ENCODE measurements at regions of chr1 and their contacts with region 1.

Region 1: DNA sequence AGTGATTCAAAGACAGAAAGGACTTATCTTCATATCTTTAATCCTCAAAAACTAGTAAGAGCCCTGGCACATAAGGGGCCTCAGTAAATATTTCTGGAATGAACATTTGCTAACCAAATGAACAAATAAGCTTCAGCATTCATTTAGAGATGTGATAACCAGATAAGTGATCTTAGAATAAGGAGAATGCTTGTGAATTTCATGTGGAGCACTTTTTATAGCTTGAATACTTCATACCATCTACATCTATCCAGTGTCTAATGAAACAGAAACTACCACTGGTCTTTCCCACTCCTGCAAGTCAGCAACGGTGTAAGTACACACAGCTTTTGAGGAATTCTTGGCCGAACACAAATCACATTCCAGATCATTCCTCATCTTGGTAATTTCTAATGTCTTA is 38.5 kb downstream of the EDEM3 start:
- DNase-seq: no peak
- H3K4me3 ChIP-seq: no peak overlapping the region
- H3K4me3 Mint-ChIP-seq: no peak overlapping the region
- H3K27ac ChIP-seq: no peak overlapping the region
- H3K27ac Mint-ChIP-seq: peak overlapping the region in 3 of 7 donors; percentile 25 to 73 (median 50)
- H3K4me1 ChIP-seq: peaks cover 5% of the 10 kb centered on the region
- H3K4me1 Mint-ChIP-seq: peaks cover 0 to 6% (median 2%) of the 10 kb centered on the region in 4 donors
- H3K27me3 ChIP-seq: no peaks in the 10 kb centered on the region
- H3K27me3 Mint-ChIP-seq: no peaks in the 10 kb centered on the region

Region 2: DNA sequence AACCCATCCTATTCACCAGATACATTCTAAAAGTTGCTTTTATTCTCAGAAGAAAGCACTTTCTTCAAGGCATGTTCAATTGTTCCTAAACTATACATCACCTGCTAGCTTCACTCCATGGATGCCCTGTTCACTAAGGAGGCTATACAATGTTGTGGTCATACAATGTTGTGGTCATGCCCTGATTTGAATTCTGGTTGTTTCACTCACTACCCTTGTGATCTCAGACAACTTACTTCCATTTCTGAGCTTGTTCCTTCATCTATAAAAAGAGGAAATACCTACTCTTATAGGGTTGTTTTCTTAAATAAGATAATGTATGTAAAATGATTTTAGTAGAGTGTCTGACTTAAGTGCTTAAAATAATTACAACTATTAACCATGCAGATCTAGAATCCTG is 18.8 kb after region 1 on chr1:
- CTCF ChIA-PET with region 1: no interaction called
- POLR2A ChIA-PET with region 1: no interaction called
- intact Hi-C with region 1: loop called (anchors 2 kb)
- DNase-seq: no peak
- H3K4me3 ChIP-seq: no peak overlapping the region
- H3K4me3 Mint-ChIP-seq: peak overlapping the region in 1 of 8 donors; percentile 2
- H3K27ac ChIP-seq: no peak overlapping the region
- H3K27ac Mint-ChIP-seq: peak overlapping the region in 3 of 7 donors; percentile 21 to 42 (median 35)
- H3K4me1 ChIP-seq: no peaks in the 10 kb centered on the region
- H3K4me1 Mint-ChIP-seq: peaks cover 0 to 18% (median 15%) of the 10 kb centered on the region in 4 donors
- H3K27me3 ChIP-seq: no peaks in the 10 kb centered on the region
- H3K27me3 Mint-ChIP-seq: no peaks in the 10 kb centered on the region

Region 3: GRCh38 chr1:185512442-185512841 is 796.3 kb after region 1 on chr1:
- CTCF ChIA-PET with region 1: no interaction called
- POLR2A ChIA-PET with region 1: no interaction called
- intact Hi-C with region 1: no loop called
- DNase-seq: no peak
- H3K4me3 ChIP-seq: no peak overlapping the region
- H3K4me3 Mint-ChIP-seq: no peak overlapping the region
- H3K27ac ChIP-seq: no peak overlapping the region
- H3K27ac Mint-ChIP-seq: peak overlapping the region in 1 of 7 donors; percentile 77
- H3K4me1 ChIP-seq: no peaks in the 10 kb centered on the region
- H3K4me1 Mint-ChIP-seq: no peaks in the 10 kb centered on the region
- H3K27me3 ChIP-seq: no peaks in the 10 kb centered on the region
- H3K27me3 Mint-ChIP-seq: no peaks in the 10 kb centered on the region

Measured in CD4-positive, alpha-beta memory T cell (primary cell).